ENCODE measurements at regions of chr7 and their contacts with region 1.

Region 1: DNA sequence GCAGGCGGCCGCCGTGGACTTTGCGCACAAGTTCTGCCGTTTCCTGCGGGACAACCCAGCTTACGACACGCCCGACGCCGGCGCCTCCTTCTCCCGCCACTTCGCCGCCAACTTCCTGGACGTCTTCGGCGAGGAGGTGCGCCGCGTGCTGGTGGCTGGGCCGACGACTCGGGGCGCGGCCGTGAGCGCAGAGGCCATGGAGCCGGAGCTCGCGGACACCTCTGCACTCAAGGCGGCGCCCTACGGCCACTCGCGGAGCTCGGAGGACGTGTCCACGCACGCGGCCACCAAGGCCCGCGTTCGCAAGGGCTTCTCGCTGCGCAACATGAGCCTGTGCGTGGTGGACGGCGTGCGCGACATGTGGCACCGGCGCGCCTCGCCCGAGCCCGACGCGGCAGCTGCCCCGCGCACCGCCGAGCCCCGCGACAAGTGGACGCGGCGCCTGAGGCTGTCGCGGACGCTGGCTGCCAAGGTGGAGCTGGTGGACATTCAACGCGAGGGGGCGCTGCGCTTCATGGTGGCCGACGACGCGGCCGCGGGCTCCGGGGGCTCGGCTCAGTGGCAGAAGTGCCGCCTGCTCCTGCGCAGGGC is 14.1 kb downstream of the SH2B2 start:
- DNase-seq: no peak
- H3K4me3 ChIP-seq: no peak overlapping the region
- H3K27ac ChIP-seq: no peak overlapping the region
- H3K4me1 ChIP-seq: no peaks in the 10 kb centered on the region
- H3K27me3 ChIP-seq: peaks cover 8 to 11% of the 10 kb centered on the region in 2 experiments
- CTCF ChIP-seq: peak; percentile 42 to 60
- POLR2A ChIP-seq: no peak

Region 2: GRCh38 chr7:102287111-102287980 is 13.4 kb before region 1 on chr7:
- CTCF ChIA-PET with region 1: interaction called, 10 read pairs
- POLR2A ChIA-PET with region 1: no interaction called
- dilution Hi-C with region 1: no loop called
- intact Hi-C with region 1: no loop called
- DNase-seq: no peak
- H3K4me3 ChIP-seq: peak overlapping the region; percentile 44 to 72 (median 69)
- H3K27ac ChIP-seq: no peak overlapping the region
- H3K4me1 ChIP-seq: peaks cover 10% of the 10 kb centered on the region
- H3K27me3 ChIP-seq: peaks cover 0 to 5% of the 10 kb centered on the region in 2 experiments
- CTCF ChIP-seq: no peak
- POLR2A ChIP-seq: no peak

Region 3: DNA sequence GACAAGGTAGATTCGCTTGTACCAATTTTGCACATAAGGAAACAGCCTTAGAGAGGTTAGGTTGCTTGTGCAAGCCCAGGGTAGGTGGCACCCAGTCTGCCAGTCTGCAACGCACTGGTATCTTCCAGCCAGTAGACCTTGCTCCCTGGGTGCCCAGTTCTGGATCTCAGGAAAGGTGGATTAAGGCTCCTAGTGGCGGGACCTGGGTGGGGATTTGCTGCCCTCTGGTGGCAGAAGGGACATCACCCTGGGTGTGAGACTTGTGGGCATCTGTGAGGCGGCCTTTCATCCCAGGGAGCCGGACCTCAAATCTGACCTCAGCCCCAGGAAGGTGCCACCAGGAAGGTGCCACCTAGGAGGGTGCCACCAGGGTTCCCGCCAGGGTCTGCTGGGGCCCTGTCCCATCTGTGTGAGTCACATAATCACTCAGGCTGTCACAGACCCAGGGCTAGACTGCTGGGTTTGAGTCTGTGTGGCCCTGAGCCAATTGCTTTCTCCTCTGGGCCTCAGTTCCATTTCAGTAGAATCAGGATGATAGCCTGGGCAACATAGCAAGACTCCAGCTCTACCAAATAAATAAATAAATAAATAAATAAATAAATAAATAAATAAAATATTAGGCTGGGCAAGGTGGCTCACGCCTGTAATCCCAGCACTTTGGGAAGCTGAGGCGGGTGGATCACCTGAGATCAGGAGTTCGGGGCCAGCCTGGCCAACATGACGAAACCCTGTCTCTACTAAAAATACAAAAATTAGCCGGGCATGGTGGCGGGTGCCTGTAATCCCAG is 90.2 kb after region 1 on chr7:
- CTCF ChIA-PET with region 1: interaction called, 10 read pairs
- POLR2A ChIA-PET with region 1: no interaction called
- dilution Hi-C with region 1: no loop called
- intact Hi-C with region 1: loop called (anchors 1 kb)
- DNase-seq: peak; percentile 73
- H3K4me3 ChIP-seq: no peak overlapping the region
- H3K27ac ChIP-seq: no peak overlapping the region
- H3K4me1 ChIP-seq: peaks cover 6% of the 10 kb centered on the region
- H3K27me3 ChIP-seq: no peaks in the 10 kb centered on the region
- CTCF ChIP-seq: peak; percentile 90 to 97
- POLR2A ChIP-seq: no peak

Measured in endothelial cell of umbilical vein (primary cell).